ENCODE measurements at regions of chr12 and their contacts with region 1.

Region 1: GRCh38 chr12:89261982-89262381 is 90.3 kb downstream of the DUSP6 start:
- DNase-seq: no peak
- H3K4me3 ChIP-seq: no peak overlapping the region
- H3K4me3 Mint-ChIP-seq: no peak overlapping the region
- H3K27ac ChIP-seq: no peak overlapping the region
- H3K27ac Mint-ChIP-seq: no peak overlapping the region
- H3K4me1 ChIP-seq: peaks cover 18 to 19% of the 10 kb centered on the region in 2 donors
- H3K4me1 Mint-ChIP-seq: peaks cover 24% of the 10 kb centered on the region
- H3K27me3 ChIP-seq: no peaks in the 10 kb centered on the region
- H3K27me3 Mint-ChIP-seq: peaks cover 0 to 4% (median 0%) of the 10 kb centered on the region in 3 donors
- CTCF ChIP-seq: no peak

Region 2: GRCh38 chr12:89051065-89051677 is 210.8 kb before region 1 on chr12:
- intact Hi-C with region 1: loop called in 1 of 2 experiments (anchors 10 kb)
- DNase-seq: peak; percentile 55 to 70 (median 64)
- H3K4me3 ChIP-seq: no peak overlapping the region
- H3K4me3 Mint-ChIP-seq: no peak overlapping the region
- H3K27ac ChIP-seq: no peak overlapping the region
- H3K27ac Mint-ChIP-seq: peak overlapping the region in 3 of 7 donors; percentile 37 to 45 (median 44)
- H3K4me1 ChIP-seq: peaks cover 12% of the 10 kb centered on the region in 2 donors
- H3K4me1 Mint-ChIP-seq: peaks cover 21% of the 10 kb centered on the region
- H3K27me3 ChIP-seq: no peaks in the 10 kb centered on the region
- H3K27me3 Mint-ChIP-seq: peaks cover 0 to 6% (median 2%) of the 10 kb centered on the region in 3 donors
- CTCF ChIP-seq: peak; percentile 95

Region 3: GRCh38 chr12:89156862-89157262 is 105.1 kb before region 1 on chr12:
- intact Hi-C with region 1: loop called (anchors 5 to 10 kb)
- DNase-seq: peak; percentile 78 to 92 (median 86)
- H3K4me3 ChIP-seq: peak overlapping the region in 1 of 3 experiments; percentile 29
- H3K4me3 Mint-ChIP-seq: peak overlapping the region in 1 of 2 donors; percentile 53
- H3K27ac ChIP-seq: peak overlapping the region; percentile 35 to 98
- H3K27ac Mint-ChIP-seq: peak overlapping the region; percentile 97 to 99 (median 98)
- H3K4me1 ChIP-seq: peaks cover 75 to 79% of the 10 kb centered on the region in 2 donors
- H3K4me1 Mint-ChIP-seq: peaks cover 46% of the 10 kb centered on the region
- H3K27me3 ChIP-seq: no peaks in the 10 kb centered on the region
- H3K27me3 Mint-ChIP-seq: no peaks in the 10 kb centered on the region
- CTCF ChIP-seq: no peak

Measured in CD14-positive monocyte (primary cell).